HEK293 (cell line): ENCODE measurements at regions of chr15 and their contacts with region 1.

Region 1: DNA sequence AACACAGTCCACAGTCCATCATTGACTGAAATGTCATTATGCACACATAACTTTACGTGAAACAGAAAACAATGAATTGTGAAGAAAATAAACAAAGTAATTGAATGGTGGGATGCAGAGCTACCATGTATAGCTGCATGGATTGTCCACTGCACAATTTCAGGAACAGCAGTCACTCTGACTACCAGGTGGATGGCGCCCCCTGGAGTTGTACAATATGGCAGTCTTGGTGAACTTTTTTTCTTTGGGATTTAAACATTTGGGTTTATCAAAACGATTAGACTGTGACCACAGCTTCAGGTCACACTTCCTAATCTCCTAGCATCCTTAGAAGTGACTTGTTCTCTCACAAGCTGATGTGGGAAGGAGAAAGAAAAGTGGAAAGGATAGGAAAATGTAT is 48.9 kb upstream of the TCF12 start:
- H3K4me3 ChIP-seq: no peak overlapping the region
- H3K27ac ChIP-seq: no peak overlapping the region
- H3K4me1 ChIP-seq: no peaks in the 10 kb centered on the region
- CTCF ChIP-seq: no peak

Region 2: DNA sequence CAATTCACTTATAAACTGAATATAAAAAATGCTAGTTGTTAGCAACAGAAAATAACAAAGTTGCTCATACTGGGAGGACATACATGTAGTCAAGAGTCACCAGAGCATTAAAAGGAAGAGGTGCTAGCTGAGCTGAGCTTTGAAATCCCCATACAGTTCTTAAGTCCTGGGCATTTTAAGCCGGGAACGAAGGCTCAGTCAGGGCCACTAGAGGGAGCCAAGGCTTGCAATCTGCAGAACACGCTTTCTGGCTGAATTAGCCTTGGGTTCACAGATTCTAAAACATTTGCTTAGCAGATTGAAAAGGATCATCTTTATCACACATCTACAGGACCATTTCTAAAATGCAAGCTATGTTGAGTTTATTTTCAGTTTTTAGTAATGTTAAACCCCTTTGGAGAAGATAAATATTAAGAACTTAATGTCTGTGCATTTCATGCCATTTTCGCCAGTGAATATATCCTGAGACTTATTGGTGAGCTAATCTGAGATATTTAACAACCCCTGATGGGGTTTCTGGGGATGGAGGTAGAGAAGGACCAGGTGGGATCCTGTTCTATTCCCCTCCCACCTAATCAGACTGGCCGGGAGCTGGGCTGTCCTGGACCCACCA is 378.4 kb before region 1 on chr15:
- CTCF ChIA-PET with region 1: interaction called, 19 read pairs
- POLR2A ChIA-PET with region 1: no interaction called
- H3K4me3 ChIP-seq: no peak overlapping the region
- H3K27ac ChIP-seq: no peak overlapping the region
- H3K4me1 ChIP-seq: no peaks in the 10 kb centered on the region
- CTCF ChIP-seq: no peak

Region 3: GRCh38 chr15:56496635-56497034 is 372.9 kb before region 1 on chr15:
- CTCF ChIA-PET with region 1: interaction called, 19 read pairs
- POLR2A ChIA-PET with region 1: no interaction called
- H3K4me3 ChIP-seq: no peak overlapping the region
- H3K27ac ChIP-seq: no peak overlapping the region
- H3K4me1 ChIP-seq: no peaks in the 10 kb centered on the region; the same call in 1 of the 2 replicates
- CTCF ChIP-seq: no peak

Region 4: GRCh38 chr15:57017024-57017423 is 147.5 kb after region 1 on chr15:
- CTCF ChIA-PET with region 1: no interaction called
- POLR2A ChIA-PET with region 1: no interaction called
- H3K4me3 ChIP-seq: no peak overlapping the region
- H3K27ac ChIP-seq: no peak overlapping the region
- H3K4me1 ChIP-seq: peaks cover 11% of the 10 kb centered on the region
- CTCF ChIP-seq: no peak